ENCODE measurements at regions of chr14 and their contacts with region 1.

Region 1: DNA sequence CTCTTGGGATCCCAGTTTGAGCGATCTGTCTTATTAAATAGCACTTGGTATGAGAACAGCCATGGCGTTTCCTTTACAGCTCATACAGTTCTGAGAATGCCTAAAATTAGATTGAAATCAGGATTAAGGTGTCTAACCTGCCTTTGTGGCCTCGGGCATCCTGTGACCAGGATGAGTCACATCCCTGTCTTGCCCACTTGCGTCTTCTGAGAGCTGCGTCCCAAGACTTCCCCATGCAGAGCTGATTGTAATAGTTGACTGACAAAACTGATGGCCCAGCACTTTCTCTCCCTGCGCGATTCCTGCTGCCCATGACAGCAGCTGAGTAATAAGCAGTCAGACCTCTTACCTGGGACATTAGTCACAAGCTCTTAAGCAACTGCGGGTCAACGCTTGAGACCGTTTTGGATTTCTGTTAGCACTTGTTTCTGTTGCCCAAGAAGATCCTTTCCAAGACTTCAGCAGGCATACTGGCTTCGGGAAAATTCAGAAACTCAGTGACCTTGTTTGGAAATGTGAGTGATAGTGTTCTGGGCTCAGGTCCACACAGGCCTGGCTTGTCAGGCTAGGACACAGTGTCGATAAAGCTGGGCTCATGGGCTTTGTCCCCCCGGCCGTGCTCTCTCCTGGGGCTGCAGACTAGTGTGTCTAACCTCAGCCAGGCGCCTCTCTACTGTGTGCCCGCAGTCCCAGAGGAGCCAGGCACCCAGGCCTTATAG is 169.9 kb upstream of the HIF1A start:
- DNase-seq: peak; percentile 88 to 92
- H3K4me3 ChIP-seq: peak overlapping the region in 1 of 2 donors; percentile 5
- H3K27ac ChIP-seq: peak overlapping the region; percentile 86 to 88
- H3K4me1 ChIP-seq: peaks cover 17 to 40% of the 10 kb centered on the region in 2 donors
- H3K27me3 ChIP-seq: no peaks in the 10 kb centered on the region
- CTCF ChIP-seq: no peak

Region 2: DNA sequence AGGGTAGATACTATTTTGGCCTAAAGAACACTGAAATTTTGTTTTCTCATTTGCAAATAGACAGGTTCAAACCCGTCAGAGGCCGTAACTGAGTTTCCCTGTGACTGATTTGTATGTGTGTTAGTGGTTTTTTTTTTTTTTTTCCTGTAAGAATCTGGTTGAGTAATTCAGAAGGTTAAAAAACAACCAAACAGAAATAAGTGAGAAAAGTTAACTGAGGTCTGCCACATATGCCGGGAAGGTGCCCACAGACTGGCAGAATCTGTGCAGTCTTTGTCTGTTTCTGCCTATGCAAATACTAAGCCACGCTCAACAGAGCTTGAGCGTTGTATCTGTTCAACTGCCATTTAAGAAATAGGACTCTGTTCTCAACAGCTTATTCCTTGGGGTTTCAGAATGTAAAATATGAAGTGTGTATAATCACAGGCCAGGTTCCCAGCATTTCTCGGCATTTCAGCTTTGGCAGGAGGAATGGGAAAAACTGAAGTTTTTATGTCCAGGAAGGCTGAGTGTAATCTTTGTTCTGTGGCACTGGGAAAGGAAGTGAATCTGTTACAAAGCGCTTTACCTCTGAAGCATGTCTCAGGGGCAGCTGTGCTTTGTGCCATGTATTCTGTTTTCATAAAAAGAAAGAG is 22.2 kb before region 1 on chr14:
- intact Hi-C with region 1: loop called (anchors 1 kb)
- DNase-seq: no peak
- H3K4me3 ChIP-seq: peak overlapping the region in 1 of 2 donors; percentile 25
- H3K27ac ChIP-seq: peak overlapping the region; percentile 44 to 50
- H3K4me1 ChIP-seq: peaks cover 7 to 17% of the 10 kb centered on the region in 2 donors
- H3K27me3 ChIP-seq: no peaks in the 10 kb centered on the region
- CTCF ChIP-seq: no peak

Region 3: DNA sequence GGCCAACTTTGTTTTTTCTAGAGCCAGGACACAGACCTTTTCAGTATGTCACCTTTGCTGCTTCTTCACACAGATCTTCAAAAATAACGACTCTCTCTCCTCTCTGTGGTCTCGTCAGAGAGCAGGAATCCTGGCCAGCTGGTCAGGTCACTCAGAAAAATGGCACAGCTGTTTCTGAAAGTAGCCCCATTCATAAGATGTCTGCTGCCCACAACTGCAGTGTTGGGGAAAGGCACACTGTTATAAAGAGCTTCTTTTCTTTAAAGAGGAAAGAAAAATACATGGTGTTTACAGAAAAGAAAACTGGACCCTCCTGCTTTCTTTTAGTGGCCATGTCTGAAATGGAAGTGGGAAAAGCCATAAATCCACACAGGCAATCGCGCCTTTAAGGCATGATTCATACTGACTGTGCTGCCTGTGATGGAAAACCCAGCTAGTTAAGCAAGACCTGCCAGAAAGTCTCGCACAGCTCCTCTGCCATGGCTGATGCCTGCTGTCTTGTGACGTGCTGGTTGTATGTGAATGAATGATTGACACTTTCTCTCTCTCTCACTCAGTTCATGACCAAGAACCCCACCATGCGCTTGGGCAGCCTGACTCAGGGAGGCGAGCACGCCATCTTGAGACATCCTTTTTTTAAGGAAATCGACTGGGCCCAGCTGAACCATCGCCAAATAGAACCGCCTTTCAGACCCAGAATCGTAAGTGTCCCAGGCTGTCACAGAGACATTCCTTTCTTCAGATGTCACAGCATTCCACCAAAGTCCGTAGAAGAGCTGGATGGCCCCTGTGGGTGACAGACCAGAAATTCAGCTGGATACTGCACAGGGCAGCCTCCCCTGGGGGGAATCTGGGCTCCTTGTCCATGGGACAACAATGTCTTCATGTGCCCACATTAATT is 22.0 kb after region 1 on chr14:
- intact Hi-C with region 1: loop called (anchors 2 kb)
- DNase-seq: peak in 1 of 2 donors; percentile 79
- H3K4me3 ChIP-seq: no peak overlapping the region
- H3K27ac ChIP-seq: peak overlapping the region; percentile 52 to 70
- H3K4me1 ChIP-seq: peaks cover 18 to 25% of the 10 kb centered on the region in 2 donors
- H3K27me3 ChIP-seq: no peaks in the 10 kb centered on the region
- CTCF ChIP-seq: no peak

Region 4: GRCh38 chr14:61609191-61609843 is 83.9 kb after region 1 on chr14:
- intact Hi-C with region 1: no loop called
- DNase-seq: no peak
- H3K4me3 ChIP-seq: no peak overlapping the region
- H3K27ac ChIP-seq: no peak overlapping the region
- H3K4me1 ChIP-seq: no peaks in the 10 kb centered on the region
- H3K27me3 ChIP-seq: no peaks in the 10 kb centered on the region
- CTCF ChIP-seq: no peak